ENCODE measurements at regions of chr4 and their contacts with region 1.

Region 1: GRCh38 chr4:4985844-4986243 is 33.4 kb downstream of the CYTL1 start:
- DNase-seq: peak; percentile 45

Region 2: DNA sequence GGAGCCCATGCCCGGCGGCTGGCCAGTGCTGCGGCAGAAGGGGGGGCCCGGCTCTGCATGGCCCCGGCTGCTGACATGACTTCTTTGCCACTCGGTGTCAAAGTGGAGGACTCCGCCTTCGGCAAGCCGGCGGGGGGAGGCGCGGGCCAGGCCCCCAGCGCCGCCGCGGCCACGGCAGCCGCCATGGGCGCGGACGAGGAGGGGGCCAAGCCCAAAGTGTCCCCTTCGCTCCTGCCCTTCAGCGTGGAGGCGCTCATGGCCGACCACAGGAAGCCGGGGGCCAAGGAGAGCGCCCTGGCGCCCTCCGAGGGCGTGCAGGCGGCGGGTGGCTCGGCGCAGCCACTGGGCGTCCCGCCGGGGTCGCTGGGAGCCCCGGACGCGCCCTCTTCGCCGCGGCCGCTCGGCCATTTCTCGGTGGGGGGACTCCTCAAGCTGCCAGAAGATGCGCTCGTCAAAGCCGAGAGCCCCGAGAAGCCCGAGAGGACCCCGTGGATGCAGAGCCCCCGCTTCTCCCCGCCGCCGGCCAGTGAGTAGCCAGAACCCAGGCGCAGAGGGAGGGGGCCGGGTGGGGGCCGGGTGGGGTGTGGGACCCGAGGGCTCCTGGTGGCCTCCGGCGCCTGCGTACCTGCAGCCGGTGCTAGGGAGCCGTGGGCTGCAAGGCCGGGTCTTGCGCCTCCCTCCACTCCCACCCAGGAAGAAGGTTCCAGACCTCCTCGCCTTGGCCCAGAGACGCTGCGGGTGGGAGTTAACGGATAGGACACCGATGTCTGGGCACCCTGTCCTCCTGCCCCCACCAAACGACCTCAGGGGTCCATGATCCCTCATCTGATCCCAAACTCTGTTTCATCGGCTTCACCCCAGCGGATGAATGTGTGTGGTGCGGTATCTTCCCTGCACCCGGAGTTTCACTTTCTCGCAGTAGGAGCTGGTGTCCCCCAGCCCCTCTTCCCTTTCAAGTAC is 125.7 kb before region 1 on chr4:
- intact Hi-C with region 1: loop called in 1 of 2 experiments (anchors 10 kb)
- DNase-seq: no peak